Endothelial cell of umbilical vein (primary cell): ENCODE measurements at regions of chr19 and their contacts with region 1.

Region 1: DNA sequence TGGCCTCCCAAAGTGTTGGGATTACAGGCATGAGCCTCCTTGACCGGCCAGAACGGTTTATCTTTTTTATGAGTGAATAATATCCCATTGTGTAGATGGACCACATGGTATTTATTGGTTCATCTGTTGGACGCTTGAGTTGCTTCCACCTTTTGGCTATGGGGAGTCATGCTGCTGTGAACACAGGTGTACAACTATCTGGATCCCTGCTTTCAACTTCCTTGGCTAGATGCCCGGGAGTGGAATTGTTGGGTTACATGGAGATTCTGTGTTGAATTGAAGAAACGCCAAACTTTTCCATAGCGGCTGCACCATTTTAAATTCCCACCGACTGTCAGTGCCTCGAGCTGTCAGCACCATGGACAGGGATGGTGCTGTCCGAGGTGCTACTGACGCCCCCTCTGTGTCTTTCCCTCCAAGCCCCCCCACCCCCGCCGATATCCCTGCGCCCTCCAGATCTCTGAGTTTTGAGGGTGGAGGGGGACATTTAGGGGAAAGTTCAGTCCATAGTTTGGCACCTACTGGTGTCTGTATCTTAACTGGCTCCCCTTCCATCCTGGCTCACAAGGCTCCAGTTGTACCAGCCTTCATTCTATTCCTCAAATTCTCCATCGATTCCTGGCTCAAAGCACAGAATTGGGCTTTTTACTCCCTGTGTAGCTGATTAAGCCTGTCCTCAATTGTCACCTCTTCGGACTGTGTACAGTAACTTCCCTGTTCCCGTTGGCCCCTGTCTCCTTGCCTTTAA is 27.3 kb downstream of the PNPLA6 start:
- DNase-seq: no peak
- H3K4me3 ChIP-seq: no peak overlapping the region
- H3K27ac ChIP-seq: no peak overlapping the region
- H3K4me1 ChIP-seq: no peaks in the 10 kb centered on the region
- H3K27me3 ChIP-seq: no peaks in the 10 kb centered on the region
- CTCF ChIP-seq: no peak
- POLR2A ChIP-seq: no peak

Region 2: GRCh38 chr19:7355151-7355820 is 207.5 kb before region 1 on chr19:
- CTCF ChIA-PET with region 1: interaction called, 24 read pairs
- POLR2A ChIA-PET with region 1: no interaction called
- dilution Hi-C with region 1: no loop called
- intact Hi-C with region 1: no loop called
- DNase-seq: no peak
- H3K4me3 ChIP-seq: no peak overlapping the region
- H3K27ac ChIP-seq: no peak overlapping the region
- H3K4me1 ChIP-seq: no peaks in the 10 kb centered on the region
- H3K27me3 ChIP-seq: peaks cover 0 to 5% of the 10 kb centered on the region in 2 experiments
- CTCF ChIP-seq: no peak
- POLR2A ChIP-seq: no peak

Region 3: DNA sequence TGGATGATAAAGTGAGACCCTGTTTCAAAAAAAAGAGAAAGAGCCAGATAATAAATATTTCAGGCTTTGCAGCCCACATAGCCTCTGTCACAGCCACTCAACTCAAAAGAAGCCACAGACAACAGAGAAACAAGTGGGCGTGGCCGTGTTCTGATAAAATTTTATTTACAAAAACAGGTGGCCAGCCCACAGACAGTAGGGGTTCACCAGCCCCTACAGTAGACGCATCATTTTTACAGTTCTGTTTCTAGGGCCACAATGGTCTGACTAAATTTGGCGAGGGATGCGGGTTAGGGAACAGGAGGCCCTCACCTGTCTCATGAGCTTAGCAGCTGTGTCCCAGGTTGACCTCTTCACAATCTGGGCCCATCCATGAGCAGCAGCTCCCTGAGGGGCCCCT is 154.6 kb before region 1 on chr19:
- CTCF ChIA-PET with region 1: no interaction called
- POLR2A ChIA-PET with region 1: no interaction called
- dilution Hi-C with region 1: no loop called
- intact Hi-C with region 1: no loop called
- DNase-seq: no peak
- H3K4me3 ChIP-seq: no peak overlapping the region
- H3K27ac ChIP-seq: no peak overlapping the region
- H3K4me1 ChIP-seq: no peaks in the 10 kb centered on the region
- H3K27me3 ChIP-seq: no peaks in the 10 kb centered on the region
- CTCF ChIP-seq: no peak
- POLR2A ChIP-seq: no peak

Region 4: DNA sequence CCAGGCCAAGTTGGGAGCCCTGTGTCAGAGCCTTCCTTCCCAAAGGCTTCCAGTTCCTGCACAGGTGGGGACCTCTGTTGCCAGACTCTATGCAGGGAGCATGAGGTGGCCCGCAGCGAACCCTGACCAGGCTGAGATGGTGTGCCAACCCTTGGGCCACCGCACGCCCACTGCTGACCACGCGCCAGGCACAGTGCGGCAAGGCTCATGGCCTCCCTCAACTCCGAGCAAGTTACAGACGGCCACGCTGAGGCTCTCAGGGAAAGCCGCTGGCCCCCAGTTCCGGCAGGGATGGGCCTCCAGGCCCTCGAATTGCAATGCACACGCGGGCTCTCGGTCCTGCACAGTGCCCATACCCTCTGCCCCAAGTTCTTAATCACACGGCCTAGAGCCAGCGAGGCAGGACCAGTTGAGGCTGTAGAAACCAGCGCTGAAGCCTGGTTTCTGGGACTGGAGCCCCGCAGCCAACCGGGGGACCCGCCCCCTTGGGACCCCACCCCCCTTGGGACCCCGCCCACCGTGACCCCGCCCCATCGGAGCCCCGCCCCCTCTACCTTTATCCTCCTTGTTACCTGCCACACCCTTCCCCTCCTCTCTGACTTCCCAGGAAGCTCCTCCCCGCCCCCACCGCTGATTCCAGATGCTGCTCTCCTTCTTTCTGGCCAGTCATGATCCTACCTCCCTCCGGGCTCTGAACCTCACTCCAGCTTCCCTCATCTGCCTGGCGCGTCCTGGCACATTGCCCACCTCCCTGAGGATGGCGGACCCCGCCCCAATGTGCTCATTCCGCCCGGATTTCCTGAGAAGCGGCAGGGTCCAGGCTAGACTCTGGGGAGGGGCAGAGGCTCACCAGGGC is 80.0 kb before region 1 on chr19:
- CTCF ChIA-PET with region 1: no interaction called
- POLR2A ChIA-PET with region 1: no interaction called
- dilution Hi-C with region 1: no loop called
- intact Hi-C with region 1: no loop called
- DNase-seq: no peak
- H3K4me3 ChIP-seq: no peak overlapping the region
- H3K27ac ChIP-seq: no peak overlapping the region
- H3K4me1 ChIP-seq: no peaks in the 10 kb centered on the region
- H3K27me3 ChIP-seq: no peaks in the 10 kb centered on the region
- CTCF ChIP-seq: no peak
- POLR2A ChIP-seq: no peak

Region 5: DNA sequence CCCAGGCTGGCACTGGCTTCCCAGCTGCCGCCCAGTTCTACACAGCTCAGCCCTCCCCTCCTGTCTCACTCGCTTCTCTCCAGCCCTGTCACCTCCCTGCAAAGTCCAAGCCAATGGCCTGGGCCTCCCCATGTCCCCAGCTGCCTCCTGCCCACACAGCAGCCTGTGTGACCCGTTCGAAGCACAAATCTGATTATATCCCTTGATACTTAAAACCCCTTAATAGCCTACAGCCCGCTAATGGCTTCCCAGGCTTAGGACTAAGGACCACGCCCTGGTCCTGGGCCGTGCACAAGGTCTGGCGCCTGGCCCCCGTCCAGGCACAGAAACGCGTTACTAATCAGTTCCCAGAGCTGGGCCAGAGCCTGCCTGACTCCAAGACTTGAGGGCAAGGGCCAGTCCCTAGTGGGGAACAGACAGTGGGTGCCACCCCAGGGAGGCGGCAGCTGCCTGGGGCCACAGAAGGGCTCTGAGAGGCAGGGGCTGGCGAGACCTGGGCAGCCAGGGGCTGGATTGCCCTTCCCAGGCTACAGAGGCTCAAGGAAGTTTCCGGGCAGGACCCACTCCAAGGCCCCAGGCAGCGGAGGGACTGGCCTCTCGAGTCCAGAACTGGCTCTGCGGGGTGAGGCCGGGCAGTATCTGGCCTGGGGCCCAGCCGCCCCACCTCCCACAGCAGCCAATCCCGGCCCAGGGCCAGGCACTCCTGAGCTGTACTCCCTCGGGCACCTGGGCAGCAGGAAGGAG is 56.1 kb after region 1 on chr19:
- CTCF ChIA-PET with region 1: interaction called, 14 read pairs
- POLR2A ChIA-PET with region 1: no interaction called
- dilution Hi-C with region 1: no loop called
- intact Hi-C with region 1: no loop called
- DNase-seq: no peak
- H3K4me3 ChIP-seq: no peak overlapping the region
- H3K27ac ChIP-seq: no peak overlapping the region
- H3K4me1 ChIP-seq: no peaks in the 10 kb centered on the region
- H3K27me3 ChIP-seq: no peaks in the 10 kb centered on the region
- CTCF ChIP-seq: no peak
- POLR2A ChIP-seq: no peak

Region 6: DNA sequence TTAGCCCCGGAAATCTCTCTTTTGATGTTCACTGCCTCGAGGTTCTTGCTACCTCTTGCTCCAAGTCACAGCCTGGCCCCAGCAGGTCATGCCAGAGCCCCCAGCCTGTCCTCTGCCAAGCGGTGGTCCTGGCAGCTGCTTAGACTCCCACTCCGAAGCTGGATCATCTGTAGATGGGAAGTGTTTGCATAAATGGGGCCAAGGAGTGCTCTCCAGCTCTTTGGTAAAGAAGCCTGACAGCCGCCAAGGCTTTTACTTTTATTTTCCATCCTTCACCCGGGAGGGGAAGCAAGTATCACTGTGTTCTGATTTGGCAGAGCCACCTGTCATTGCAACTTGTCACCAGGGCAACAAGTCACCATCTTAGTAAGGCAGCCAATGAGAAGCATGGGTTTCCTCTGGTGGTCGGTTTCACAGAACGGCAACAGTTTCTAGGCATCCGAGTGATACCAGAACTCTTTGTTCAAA is 95.4 kb after region 1 on chr19:
- CTCF ChIA-PET with region 1: interaction called, 11 read pairs
- POLR2A ChIA-PET with region 1: no interaction called
- dilution Hi-C with region 1: no loop called
- intact Hi-C with region 1: no loop called
- DNase-seq: no peak
- H3K4me3 ChIP-seq: no peak overlapping the region
- H3K27ac ChIP-seq: no peak overlapping the region
- H3K4me1 ChIP-seq: peaks cover 10% of the 10 kb centered on the region
- H3K27me3 ChIP-seq: no peaks in the 10 kb centered on the region
- CTCF ChIP-seq: no peak
- POLR2A ChIP-seq: no peak

Region 7: GRCh38 chr19:7799640-7800355 is 237.0 kb after region 1 on chr19:
- CTCF ChIA-PET with region 1: interaction called, 201 read pairs
- POLR2A ChIA-PET with region 1: interaction called, 3 read pairs
- dilution Hi-C with region 1: no loop called
- intact Hi-C with region 1: loop called (anchors 1 kb)
- DNase-seq: peak; percentile 83
- H3K4me3 ChIP-seq: peak overlapping the region in 2 of 3 experiments; percentile 2 to 12
- H3K27ac ChIP-seq: no peak overlapping the region
- H3K4me1 ChIP-seq: peaks cover 22% of the 10 kb centered on the region
- H3K27me3 ChIP-seq: no peaks in the 10 kb centered on the region
- CTCF ChIP-seq: peak; percentile 43 to 47
- POLR2A ChIP-seq: no peak